Activated naive CD8-positive, alpha-beta T cell treated with anti-CD3 and anti-CD28 coated beads, Interleukin-2, amount 10 ng/mL, durations not matched to agents 7 days and 5 days (primary cell): ENCODE measurements at regions of chr5 and their contacts with region 1.

Region 1: DNA sequence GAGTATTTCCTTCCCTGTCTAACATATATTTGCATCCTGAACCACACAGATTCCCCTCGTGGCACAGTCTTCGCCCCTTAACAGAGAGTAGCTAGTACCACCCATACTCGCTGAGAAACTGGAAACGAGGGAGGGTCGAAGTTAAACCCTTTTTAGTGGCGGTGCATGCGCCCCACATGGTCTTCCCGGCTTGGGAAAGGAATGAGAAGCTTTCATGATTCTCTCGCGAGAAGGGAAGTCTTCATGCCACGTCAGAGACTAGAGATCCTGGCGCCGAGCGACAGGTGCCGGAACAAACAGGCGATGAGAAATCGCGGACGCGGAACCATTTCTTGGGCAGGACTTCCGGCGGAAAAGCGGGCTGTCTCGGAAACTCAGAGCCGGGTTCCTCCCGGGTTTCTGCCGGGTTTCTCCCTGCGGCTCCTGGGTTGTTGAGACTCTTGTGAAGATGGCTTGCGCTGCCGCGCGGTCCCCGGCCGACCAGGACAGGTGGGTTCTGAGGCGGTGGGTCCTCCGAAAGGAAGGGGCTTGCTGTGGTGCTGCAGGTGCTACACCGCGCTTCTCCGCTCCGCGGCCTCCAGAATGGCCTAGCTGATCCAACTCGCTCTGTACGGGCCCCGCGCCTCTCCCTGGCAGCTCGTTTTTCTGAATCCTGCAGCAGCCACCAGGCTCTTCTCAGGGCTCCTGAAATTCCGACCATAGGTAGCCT is at the start of gene SRP19:
- DNase-seq: peak; percentile 88
- ATAC-seq: peak; percentile 95
- H3K4me3 Mint-ChIP-seq: peak within 1 kb of the TSS; percentile 96
- H3K27ac Mint-ChIP-seq: peak within 1 kb of the TSS; percentile 94
- H3K4me1 Mint-ChIP-seq: peaks cover 24% of the 10 kb centered on the region
- H3K27me3 Mint-ChIP-seq: peaks cover 20% of the 10 kb centered on the region
- total RNA-seq, gene SRP19: 51.2 to 57.0 TPM

Region 2: GRCh38 chr5:111863801-111864200 is 997.3 kb before region 1 on chr5:
- POLR2A ChIA-PET with region 1: no interaction called
- DNase-seq: no peak
- ATAC-seq: no peak
- H3K4me3 Mint-ChIP-seq: no peak overlapping the region
- H3K27ac Mint-ChIP-seq: no peak overlapping the region
- H3K4me1 Mint-ChIP-seq: no peaks in the 10 kb centered on the region
- H3K27me3 Mint-ChIP-seq: peaks cover 5% of the 10 kb centered on the region

Region 3: DNA sequence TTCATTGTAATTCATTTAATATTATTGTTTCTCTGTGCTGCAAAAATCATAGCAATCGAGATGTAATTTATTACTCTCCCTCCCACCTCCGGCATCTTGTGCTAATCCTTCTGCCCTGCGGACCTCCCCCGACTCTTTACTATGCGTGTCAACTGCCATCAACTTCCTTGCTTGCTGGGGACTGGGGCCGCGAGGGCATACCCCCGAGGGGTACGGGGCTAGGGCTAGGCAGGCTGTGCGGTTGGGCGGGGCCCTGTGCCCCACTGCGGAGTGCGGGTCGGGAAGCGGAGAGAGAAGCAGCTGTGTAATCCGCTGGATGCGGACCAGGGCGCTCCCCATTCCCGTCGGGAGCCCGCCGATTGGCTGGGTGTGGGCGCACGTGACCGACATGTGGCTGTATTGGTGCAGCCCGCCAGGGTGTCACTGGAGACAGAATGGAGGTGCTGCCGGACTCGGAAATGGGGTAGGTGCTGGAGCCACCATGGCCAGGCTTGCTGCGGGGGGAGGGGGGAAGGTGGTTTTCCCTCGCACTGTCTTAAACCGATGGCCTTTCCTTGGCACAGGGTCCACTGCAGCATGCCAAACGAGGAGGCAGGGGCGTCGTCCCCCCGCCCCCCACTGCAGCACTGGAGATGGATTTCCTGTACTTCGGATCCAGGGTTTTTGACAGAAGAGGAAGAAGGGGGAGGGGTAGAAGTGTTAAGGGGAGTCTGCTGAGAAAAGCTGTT is 123.5 kb before region 1 on chr5 and contains the start of gene APC:
- POLR2A ChIA-PET with region 1: no interaction called
- DNase-seq: peak; percentile 83
- ATAC-seq: peak; percentile 100
- H3K4me3 Mint-ChIP-seq: peak within 1 kb of the TSS; percentile 89
- H3K27ac Mint-ChIP-seq: peak within 1 kb of the TSS; percentile 82
- H3K4me1 Mint-ChIP-seq: peaks cover 11% of the 10 kb centered on the region
- H3K27me3 Mint-ChIP-seq: no peaks in the 10 kb centered on the region
- total RNA-seq, gene APC: 28.6 to 33.6 TPM

Region 4: DNA sequence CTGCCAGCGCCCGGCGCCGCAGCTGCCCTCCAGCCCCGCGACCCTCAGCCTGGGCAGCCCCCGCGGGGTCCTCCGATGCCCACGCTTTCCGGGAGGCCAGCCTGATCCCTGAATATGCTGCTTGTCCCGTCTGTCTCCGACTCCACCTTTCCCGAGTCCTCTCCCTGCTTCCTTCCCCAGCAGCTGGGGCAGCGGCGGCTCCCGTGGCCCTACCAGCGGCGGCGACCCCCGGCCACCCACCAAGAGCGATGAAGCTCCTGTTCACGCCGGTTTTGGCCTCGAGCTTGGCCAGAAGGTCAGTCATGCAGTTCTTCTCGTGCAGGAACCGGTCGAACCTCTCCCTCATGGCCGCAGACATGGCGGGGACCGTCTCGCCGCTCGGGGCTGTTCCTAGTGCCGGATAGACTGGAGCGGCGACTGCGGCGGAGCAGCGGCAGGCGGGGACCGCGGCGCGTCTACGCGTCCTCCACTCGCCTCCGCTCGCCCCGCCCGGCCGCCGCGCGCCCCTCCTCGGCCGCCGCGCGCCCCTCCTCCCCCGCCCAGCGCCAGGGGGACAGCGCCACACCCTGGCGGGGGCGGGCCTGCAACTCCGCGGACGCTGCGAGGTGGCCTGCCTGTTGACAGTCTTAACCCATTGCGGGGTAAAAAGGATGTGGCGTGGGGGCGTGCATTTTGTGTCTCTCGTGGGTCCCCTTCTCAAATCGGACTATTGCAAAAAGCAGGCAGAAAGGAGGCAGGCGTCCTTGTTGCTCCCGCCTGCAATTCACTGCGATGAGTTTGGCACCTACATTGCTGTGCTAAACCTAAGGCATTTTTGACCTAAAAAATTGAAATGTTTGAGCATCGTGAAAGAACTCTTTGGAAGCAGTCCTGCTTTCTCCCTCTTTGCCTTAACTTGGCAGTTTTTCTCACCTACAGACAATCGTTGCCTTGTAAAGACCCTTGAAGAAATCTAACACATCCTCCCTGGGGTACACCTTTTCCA is 61.0 kb after region 1 on chr5 and contains the start of gene REEP5:
- POLR2A ChIA-PET with region 1: interaction called, 15 read pairs
- DNase-seq: peak; percentile 95
- ATAC-seq: peak; percentile 82
- H3K4me3 Mint-ChIP-seq: peak within 1 kb of the TSS; percentile 93
- H3K27ac Mint-ChIP-seq: peak within 1 kb of the TSS; percentile 95
- H3K4me1 Mint-ChIP-seq: peaks cover 51% of the 10 kb centered on the region
- H3K27me3 Mint-ChIP-seq: no peaks in the 10 kb centered on the region
- total RNA-seq, gene REEP5: 59.0 to 65.8 TPM

Region 5: GRCh38 chr5:113140837-113141661 is 280.0 kb after region 1 on chr5:
- POLR2A ChIA-PET with region 1: no interaction called
- DNase-seq: no peak
- ATAC-seq: no peak
- H3K4me3 Mint-ChIP-seq: no peak overlapping the region
- H3K27ac Mint-ChIP-seq: no peak overlapping the region
- H3K4me1 Mint-ChIP-seq: no peaks in the 10 kb centered on the region
- H3K27me3 Mint-ChIP-seq: no peaks in the 10 kb centered on the region